ENCODE measurements at regions of chr16 and their contacts with region 1.

Region 1: DNA sequence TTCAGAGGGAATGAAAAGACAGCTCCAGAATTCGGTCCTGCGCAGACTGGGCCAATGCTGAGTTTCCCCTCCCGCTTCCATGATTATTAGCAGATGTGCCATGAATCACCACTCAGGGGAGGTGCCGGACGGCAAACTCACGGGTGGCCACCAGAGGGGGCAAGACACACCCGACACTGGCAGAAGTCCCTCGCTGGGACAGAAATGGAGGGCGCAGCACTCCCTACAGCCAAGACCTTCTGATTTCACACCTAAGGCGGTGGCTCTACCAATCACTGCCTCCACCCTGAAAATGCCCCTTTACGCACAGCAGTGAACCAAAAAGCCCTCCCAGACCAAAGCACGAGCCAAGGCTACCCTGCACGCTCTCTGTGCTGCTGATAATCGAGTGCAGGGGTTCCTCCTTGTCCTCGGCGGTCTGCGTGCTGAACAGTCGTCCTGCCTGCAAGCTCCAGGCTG is 26.8 kb downstream of the TRAP1 start:
- DNase-seq: peak; percentile 85 to 88
- ATAC-seq: peak; percentile 97

Region 2: GRCh38 chr16:3879887-3880564 is 189.5 kb after region 1 on chr16:
- intact Hi-C with region 1: loop called in 1 of 2 experiments (anchors 10 kb)
- DNase-seq: peak; percentile 68 to 86
- ATAC-seq: peak; percentile 71